PC-3 (cell line): ENCODE measurements at regions of chrX and their contacts with region 1.

Region 1: DNA sequence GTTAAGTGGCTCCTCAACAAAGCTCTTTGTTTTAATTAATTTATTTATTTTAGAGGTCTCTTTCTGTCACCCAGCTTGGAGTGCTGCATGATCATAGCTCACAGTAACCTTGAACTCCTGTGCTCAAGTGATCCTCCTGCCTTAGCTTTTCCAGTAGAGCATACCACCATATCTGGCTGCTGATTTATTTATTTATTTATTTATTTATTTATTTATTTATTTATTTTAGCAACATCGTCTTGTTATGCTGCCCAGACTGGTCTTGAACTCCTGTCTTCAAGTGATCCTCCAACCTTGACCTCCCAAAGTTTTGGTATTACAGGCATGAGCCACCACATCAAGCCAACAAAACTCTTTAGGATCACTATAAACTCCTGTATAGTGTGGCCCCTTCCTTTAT is 15.8 kb upstream of the KLF8 start:
- DNase-seq: no peak
- ATAC-seq: no peak
- H3K4me3 ChIP-seq: no peak overlapping the region
- H3K27ac ChIP-seq: no peak overlapping the region
- H3K4me1 ChIP-seq: no peaks in the 10 kb centered on the region
- H3K27me3 ChIP-seq: no peaks in the 10 kb centered on the region
- CTCF ChIP-seq: no peak

Region 2: GRCh38 chrX:56232221-56233082 is 16.1 kb after region 1 on chrX and contains the start of gene KLF8:
- CTCF ChIA-PET with region 1: no interaction called
- POLR2A ChIA-PET with region 1: interaction called, 10 read pairs
- intact Hi-C with region 1: no loop called
- DNase-seq: no peak
- ATAC-seq: no peak
- H3K4me3 ChIP-seq: no peak within 1 kb of the TSS
- H3K27ac ChIP-seq: no peak within 1 kb of the TSS
- H3K4me1 ChIP-seq: no peaks in the 10 kb centered on the region
- H3K27me3 ChIP-seq: no peaks in the 10 kb centered on the region
- CTCF ChIP-seq: no peak
- total RNA-seq, gene KLF8: 0.04 TPM in 1 of 2 replicates, not detected in the other